Activated naive CD4-positive, alpha-beta T cell treated with anti-CD3 and anti-CD28 coated beads for 36 hours (primary cell): ENCODE measurements at regions of chr6 and their contacts with region 1.

Region 1: DNA sequence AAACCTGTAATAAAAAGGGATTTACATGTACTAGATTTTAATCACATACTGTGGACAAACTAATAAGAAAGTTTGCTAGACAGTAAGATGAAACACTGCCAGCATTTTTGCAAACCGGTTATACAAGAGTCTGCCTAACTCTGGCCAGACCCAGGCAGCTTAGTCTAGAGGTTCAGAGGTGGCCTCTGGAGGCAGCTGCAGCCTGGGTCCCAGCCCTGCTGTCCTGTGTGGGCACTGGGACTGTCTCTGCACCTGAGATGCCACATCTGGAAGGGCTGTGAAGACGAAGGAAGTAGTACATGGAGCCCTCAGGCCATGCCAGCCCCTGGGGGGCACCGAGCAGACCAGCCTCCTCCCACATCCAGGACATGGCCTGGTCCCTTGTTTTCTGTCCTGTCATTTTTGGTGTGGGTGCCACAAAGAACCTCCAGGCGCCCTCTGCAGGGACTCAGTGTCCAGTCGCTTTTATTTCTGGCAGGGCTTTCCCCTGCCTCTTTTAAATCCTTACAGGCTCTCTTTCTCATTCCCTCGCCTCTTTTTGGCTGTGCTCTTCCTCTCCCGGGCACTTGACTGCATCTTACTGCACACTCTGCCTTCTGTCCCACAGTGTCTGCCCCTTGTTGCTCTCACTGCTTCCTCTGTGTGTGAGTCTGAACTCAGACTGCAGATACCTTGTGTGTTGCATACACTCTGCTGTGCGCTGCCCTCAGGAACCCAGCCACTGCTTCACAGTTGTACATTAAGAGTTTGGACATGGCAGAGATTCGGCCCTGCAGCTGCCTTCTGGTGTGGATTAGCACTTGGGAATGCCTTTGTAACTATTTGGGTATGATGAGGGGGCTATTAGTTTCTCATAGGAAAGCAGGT is 216.7 kb downstream of the ZDHHC14 start:
- DNase-seq: peak; percentile 69
- H3K4me3 Mint-ChIP-seq: no peak overlapping the region
- H3K27ac Mint-ChIP-seq: no peak overlapping the region
- H3K4me1 Mint-ChIP-seq: no peaks in the 10 kb centered on the region
- H3K27me3 Mint-ChIP-seq: no peaks in the 10 kb centered on the region

Region 2: DNA sequence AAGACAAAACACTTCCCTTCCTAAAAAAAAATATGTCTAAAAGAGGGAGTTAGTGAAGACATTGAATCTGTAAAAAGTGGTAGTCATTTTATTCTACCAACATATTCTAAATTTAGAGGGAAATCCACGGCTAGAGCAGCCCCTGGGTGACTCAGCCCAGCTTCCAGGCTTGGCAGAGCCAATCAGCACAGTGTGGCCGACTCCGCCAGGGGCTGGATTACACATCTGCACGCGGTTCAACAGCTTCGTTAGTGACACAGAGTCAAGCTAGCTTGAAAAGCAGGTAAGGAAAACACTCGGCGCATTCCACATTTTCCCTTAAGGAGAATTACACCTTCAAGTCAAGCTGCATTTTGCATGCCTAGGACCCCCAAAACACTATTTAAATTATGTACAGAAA is 879.0 kb before region 1 on chr6:
- CTCF ChIA-PET with region 1: no interaction called
- intact Hi-C with region 1: no loop called
- DNase-seq: no peak
- H3K4me3 Mint-ChIP-seq: no peak overlapping the region
- H3K27ac Mint-ChIP-seq: no peak overlapping the region
- H3K4me1 Mint-ChIP-seq: peaks cover 16% of the 10 kb centered on the region
- H3K27me3 Mint-ChIP-seq: no peaks in the 10 kb centered on the region

Region 3: DNA sequence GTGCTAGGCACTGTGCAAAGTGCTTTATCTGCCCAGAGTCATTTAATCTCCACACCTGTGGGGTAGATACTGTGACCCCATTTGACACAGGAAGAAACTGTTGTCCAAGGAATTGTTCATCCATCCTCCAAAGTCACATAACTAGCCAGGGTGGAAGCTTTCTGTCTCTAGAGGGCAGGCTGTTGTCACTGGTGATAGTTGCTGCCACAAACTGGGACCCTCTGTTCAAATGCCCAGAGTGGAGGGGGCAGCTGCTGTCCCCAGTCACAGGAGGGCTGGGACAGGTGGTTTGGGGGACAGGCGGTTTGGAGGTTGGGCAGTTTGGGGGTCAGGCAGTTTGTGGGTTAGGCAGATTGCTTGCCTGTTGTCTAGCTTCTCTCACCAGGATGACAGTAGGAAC is 258.2 kb before region 1 on chr6:
- CTCF ChIA-PET with region 1: no interaction called
- intact Hi-C with region 1: loop called (anchors 5 kb)
- DNase-seq: no peak
- H3K4me3 Mint-ChIP-seq: no peak overlapping the region
- H3K27ac Mint-ChIP-seq: no peak overlapping the region
- H3K4me1 Mint-ChIP-seq: no peaks in the 10 kb centered on the region
- H3K27me3 Mint-ChIP-seq: peaks cover 41% of the 10 kb centered on the region